ENCODE measurements at regions of chr10 and their contacts with region 1.

Region 1: GRCh38 chr10:119859420-119860258 is 13.0 kb downstream of the MCMBP start:
- DNase-seq: no peak
- H3K4me3 ChIP-seq: no peak overlapping the region
- H3K27ac ChIP-seq: no peak overlapping the region
- H3K4me1 ChIP-seq: peaks cover 0 to 17% (median 10%) of the 10 kb centered on the region in 4 donors
- H3K27me3 ChIP-seq: no peaks in the 10 kb centered on the region
- CTCF ChIP-seq: peak in 3 of 4 experiments; percentile 36 to 65 (median 50)
- EP300 ChIP-seq: no peak
- POLR2A ChIP-seq: no peak

Region 2: GRCh38 chr10:119608316-119609155 is 251.1 kb before region 1 on chr10:
- intact Hi-C with region 1: loop called (anchors 2 kb)
- DNase-seq: peak; percentile 79
- H3K4me3 ChIP-seq: peak overlapping the region in 1 of 4 donors; percentile 15
- H3K27ac ChIP-seq: no peak overlapping the region
- H3K4me1 ChIP-seq: peaks cover 0 to 6% (median 2%) of the 10 kb centered on the region in 4 donors
- H3K27me3 ChIP-seq: no peaks in the 10 kb centered on the region
- CTCF ChIP-seq: peak; percentile 53 to 67 (median 61)
- EP300 ChIP-seq: no peak
- POLR2A ChIP-seq: no peak

Region 3: DNA sequence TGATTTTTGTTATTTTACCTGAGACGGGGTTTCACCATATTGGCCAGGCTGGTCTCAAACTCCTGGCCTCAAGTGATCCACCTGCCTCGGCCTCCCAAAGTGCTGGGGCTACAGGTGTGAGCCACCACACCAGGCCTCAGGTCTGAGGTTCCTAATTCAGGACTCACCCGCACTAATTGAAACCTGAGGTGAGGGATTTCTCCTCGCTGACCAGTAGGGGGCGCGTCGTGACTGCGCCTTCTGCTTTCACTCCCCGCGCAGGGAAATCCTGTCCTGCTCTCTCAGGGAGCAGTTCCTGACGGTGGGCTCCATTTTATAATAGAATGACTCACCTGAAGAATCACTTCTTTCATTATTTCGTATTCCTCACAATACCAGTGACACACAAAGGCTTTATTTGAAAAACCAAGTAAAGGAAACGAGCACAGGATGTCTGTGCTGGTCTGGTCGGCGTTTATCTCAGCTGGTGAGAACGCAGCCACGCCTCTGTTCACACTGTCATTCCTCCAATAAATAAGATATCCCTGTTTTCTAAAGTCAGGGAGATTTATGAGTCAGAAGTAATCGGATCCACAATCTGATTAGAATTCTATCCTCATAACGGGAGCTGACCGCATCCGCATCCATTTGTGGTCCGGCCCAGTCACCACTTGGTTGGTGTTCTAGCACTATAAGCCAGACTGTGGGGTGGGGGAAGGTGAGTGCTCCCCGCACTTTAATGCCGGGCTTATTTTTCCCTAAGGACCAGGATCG is 173.0 kb before region 1 on chr10:
- intact Hi-C with region 1: loop called (anchors 5 kb)
- DNase-seq: peak; percentile 90
- H3K4me3 ChIP-seq: peak overlapping the region in 3 of 4 donors; percentile 15 to 22 (median 15)
- H3K27ac ChIP-seq: peak overlapping the region in 3 of 4 donors; percentile 29 to 59 (median 49)
- H3K4me1 ChIP-seq: peaks cover 0 to 11% (median 8%) of the 10 kb centered on the region in 4 donors
- H3K27me3 ChIP-seq: no peaks in the 10 kb centered on the region
- CTCF ChIP-seq: peak; percentile 75 to 95 (median 84)
- EP300 ChIP-seq: no peak
- POLR2A ChIP-seq: no peak

Region 4: GRCh38 chr10:119750391-119751230 is 109.0 kb before region 1 on chr10:
- intact Hi-C with region 1: loop called (anchors 1 kb)
- DNase-seq: peak; percentile 89
- H3K4me3 ChIP-seq: no peak overlapping the region
- H3K27ac ChIP-seq: peak overlapping the region in 3 of 4 donors; percentile 8 to 49 (median 30)
- H3K4me1 ChIP-seq: peaks cover 0 to 45% (median 31%) of the 10 kb centered on the region in 4 donors
- H3K27me3 ChIP-seq: no peaks in the 10 kb centered on the region
- CTCF ChIP-seq: peak; percentile 88 to 93 (median 92)
- EP300 ChIP-seq: no peak
- POLR2A ChIP-seq: no peak

Region 5: DNA sequence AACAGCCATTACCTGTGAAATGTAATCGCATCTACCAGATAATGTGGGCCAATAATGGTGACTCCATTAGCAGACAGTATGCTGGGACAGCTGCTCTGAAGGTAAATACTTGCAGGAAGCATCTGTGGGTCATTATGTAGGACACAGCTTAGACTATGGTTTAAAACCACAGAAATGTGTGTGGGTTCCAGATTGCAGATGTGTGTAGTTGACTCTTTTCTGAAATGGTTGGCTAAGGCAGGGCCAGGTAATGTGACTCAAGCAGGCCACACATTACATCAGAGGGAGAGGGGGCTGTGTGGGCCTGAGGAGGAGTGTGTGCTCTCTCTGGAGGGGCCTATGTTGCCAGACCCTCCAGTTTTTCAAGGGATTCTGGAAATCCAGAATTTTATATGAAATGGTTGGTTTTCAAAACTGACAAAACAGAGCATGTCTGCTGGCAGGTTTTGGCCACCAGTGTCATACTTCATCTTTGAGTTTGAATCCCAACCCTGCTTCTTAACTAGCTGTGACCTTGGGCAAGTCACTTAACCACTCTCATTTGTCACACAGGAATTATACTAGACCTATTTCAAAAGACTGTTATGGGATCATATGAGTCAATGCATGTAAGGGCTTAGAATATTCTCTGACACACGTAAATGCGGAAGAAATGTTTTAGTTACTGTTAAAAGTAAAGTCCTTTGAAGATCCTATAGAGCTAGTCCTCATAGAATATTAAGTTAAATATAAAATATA is 51.5 kb before region 1 on chr10:
- intact Hi-C with region 1: no loop called
- DNase-seq: no peak
- H3K4me3 ChIP-seq: no peak overlapping the region
- H3K27ac ChIP-seq: no peak overlapping the region
- H3K4me1 ChIP-seq: peaks cover 0 to 23% (median 11%) of the 10 kb centered on the region in 4 donors
- H3K27me3 ChIP-seq: no peaks in the 10 kb centered on the region
- CTCF ChIP-seq: no peak
- EP300 ChIP-seq: no peak
- POLR2A ChIP-seq: no peak

Measured in sigmoid colon (tissue), 7 donors.